Vagina (tissue), 2 donors: ENCODE measurements at regions of chr9 and their contacts with region 1.

Region 1: GRCh38 chr9:114291064-114291474 is 31.8 kb upstream of the ORM1 start:
- DNase-seq: no peak
- H3K4me3 ChIP-seq: no peak overlapping the region
- H3K27ac ChIP-seq: peak overlapping the region; percentile 61
- H3K4me1 ChIP-seq: peaks cover under 1% of the 10 kb centered on the region
- H3K27me3 ChIP-seq: no peaks in the 10 kb centered on the region
- CTCF ChIP-seq: peak; percentile 86 to 95 (median 94)
- POLR2A ChIP-seq: no peak

Region 2: GRCh38 chr9:114082017-114082762 is 208.9 kb before region 1 on chr9:
- intact Hi-C with region 1: loop called (anchors 5 kb)
- DNase-seq: peak; percentile 94 to 95
- H3K4me3 ChIP-seq: no peak overlapping the region
- H3K27ac ChIP-seq: no peak overlapping the region
- H3K4me1 ChIP-seq: peaks cover 11% of the 10 kb centered on the region
- H3K27me3 ChIP-seq: no peaks in the 10 kb centered on the region
- CTCF ChIP-seq: peak; percentile 88 to 93 (median 91)
- POLR2A ChIP-seq: no peak

Region 3: GRCh38 chr9:114107286-114108001 is 183.6 kb before region 1 on chr9:
- intact Hi-C with region 1: loop called (anchors 2 kb)
- DNase-seq: no peak
- H3K4me3 ChIP-seq: no peak overlapping the region
- H3K27ac ChIP-seq: no peak overlapping the region
- H3K4me1 ChIP-seq: no peaks in the 10 kb centered on the region
- H3K27me3 ChIP-seq: no peaks in the 10 kb centered on the region
- CTCF ChIP-seq: no peak
- POLR2A ChIP-seq: no peak

Region 4: DNA sequence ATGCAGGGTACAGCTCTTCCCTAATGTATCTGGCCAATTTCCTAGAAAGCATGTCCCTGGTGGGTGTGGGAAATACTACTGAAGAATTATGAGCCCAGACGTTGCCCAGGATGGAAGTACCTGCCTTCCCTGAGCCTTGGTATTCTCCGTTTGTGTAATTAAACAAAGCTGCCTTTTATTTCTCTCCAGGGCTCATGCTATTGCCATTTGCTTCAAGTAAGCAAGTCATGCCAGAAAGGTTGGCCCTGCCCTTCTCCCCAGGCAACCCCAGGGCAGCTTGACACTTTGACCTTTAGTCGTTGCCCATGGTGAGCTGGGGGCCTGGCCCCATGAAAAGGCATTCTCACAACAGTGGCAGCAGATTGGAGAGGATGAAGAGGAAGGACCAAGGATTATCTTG is 131.4 kb before region 1 on chr9:
- intact Hi-C with region 1: loop called (anchors 1 kb)
- DNase-seq: no peak
- H3K4me3 ChIP-seq: no peak overlapping the region
- H3K27ac ChIP-seq: peak overlapping the region; percentile 86
- H3K4me1 ChIP-seq: peaks cover 84% of the 10 kb centered on the region
- H3K27me3 ChIP-seq: no peaks in the 10 kb centered on the region
- CTCF ChIP-seq: no peak
- POLR2A ChIP-seq: no peak

Region 5: DNA sequence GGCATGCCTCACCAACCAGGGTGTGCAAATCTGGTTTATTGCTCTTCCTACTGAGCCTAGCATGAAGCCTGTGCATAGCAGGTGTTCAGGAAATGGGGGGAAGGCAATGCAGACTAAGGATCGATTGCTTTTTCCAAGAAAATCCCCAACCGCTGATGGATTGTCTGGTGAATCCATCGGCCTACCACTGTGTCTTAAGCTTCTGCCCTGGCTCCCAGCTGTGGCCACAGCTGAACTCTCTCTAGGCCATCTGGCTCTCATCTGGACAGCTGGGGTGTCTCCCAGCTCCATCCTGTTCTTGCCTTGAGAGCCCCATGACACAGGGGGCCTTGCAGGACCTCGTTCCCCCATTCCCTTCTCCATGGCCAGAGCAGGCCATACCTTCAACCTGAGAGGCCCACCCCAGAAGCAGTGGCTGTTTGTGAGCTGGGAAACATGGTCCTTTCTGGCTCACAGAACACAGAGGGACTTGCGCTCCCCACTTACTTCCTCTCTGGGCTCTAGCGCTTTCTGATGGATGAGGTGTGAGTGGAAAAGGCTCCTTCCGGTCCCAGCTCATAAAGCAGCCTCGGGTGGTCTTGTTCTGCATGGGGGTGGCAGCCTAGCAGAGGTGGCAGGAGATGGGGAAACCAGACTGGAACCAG is 94.0 kb before region 1 on chr9:
- intact Hi-C with region 1: no loop called
- DNase-seq: no peak
- H3K4me3 ChIP-seq: no peak overlapping the region
- H3K27ac ChIP-seq: no peak overlapping the region
- H3K4me1 ChIP-seq: no peaks in the 10 kb centered on the region
- H3K27me3 ChIP-seq: no peaks in the 10 kb centered on the region
- CTCF ChIP-seq: no peak
- POLR2A ChIP-seq: no peak

Region 6: GRCh38 chr9:114465903-114466530 is 174.9 kb after region 1 on chr9:
- intact Hi-C with region 1: no loop called
- DNase-seq: no peak
- H3K4me3 ChIP-seq: no peak overlapping the region
- H3K27ac ChIP-seq: no peak overlapping the region
- H3K4me1 ChIP-seq: no peaks in the 10 kb centered on the region
- H3K27me3 ChIP-seq: no peaks in the 10 kb centered on the region
- CTCF ChIP-seq: no peak
- POLR2A ChIP-seq: no peak